ENCODE measurements at regions of chr5 and their contacts with region 1.

Region 1: DNA sequence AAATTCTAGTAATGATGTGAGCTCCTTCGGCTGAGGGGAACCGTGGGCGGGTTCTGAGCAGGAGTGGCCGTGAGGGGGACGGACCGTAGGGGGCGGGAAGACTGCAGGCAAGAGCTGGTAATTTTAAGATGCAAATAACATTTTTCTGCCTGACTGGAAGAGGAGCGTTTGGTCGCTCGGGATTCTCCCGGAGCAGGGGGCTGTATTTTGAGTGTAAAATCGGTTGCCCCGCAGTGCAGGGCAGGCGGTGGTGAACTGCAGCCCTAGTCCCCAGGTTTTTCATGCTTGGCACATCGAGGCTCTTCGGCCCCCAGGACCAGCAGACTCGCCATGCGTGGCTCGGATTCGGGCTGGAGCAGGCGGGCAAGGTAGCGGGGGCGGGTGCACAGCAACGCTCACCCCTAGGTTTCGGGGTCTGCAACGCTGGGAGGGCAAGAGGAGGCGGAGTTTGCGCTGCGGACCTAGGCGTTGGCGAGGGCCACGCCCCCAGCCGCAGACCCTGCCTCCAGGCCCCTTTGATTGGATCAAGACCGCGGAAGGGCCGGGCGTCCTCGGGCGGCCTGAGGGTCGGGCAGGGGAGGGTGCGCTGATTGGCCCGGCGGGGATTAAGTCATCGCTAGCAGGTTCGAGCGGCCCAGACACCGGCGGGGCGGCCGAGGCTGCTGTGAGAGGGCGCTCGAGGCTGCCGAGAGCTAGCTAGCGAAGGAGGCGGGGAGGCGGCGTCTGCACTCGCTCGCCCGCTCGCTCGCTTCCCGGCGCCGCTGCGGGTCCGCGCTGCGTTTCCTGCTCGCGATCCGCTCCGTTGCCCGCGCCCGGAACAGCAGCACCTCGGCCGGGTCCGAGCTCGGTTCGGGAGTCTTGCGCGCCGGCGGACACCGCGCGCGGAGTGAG is at the start of gene ARHGAP26:
- DNase-seq: peak; percentile 98 to 99 (median 99)
- ATAC-seq: peak; percentile 95 to 99 (median 96)
- H3K4me3 ChIP-seq: peak within 1 kb of the TSS; percentile 65 to 99 (median 81)
- H3K27ac ChIP-seq: peak within 1 kb of the TSS; percentile 81 to 94 (median 90)
- H3K4me1 ChIP-seq: peaks cover 5 to 46% (median 28%) of the 10 kb centered on the region in 12 donors
- H3K27me3 ChIP-seq: no peaks in the 10 kb centered on the region
- CTCF ChIP-seq: peak in 9 of 12 donors; percentile 7 to 62 (median 43)
- POLR2A ChIP-seq: peak; percentile 99 to 100
- total RNA-seq, gene ARHGAP26: 22.9 to 52.1 (median 35.6) TPM

Region 2: DNA sequence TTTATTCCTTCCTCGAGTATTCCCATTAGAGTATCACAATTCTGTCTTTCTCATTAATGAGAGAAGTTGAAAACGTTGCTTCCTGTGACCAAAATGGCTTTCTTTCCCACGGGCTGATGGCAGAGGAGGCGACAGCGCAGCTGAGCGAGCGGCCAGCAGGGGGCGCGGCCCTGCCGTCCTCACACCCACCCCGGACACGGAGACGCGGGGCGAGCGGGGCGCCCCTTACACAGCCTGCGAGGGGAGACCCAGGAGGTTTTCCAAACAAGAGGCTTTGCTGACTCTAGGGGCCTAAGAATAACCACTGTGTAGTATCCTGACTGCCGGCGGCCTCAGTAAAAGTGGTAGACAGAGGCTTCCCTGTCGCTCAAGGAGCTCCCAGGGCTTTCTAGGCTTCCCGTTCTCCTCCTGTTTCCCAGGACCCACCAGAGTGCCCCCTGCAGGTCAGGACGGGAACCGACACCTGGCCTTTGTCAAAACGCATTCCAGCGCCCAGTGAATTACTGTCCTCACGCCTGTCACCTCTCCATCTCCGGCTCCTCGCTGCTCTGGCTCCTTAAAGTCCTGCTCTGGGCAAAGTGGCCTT is 56.8 kb before region 1 on chr5:
- intact Hi-C with region 1: loop called in 3 of 10 experiments (anchors 1 to 5 kb)
- DNase-seq: peak; percentile 88 to 94 (median 91)
- ATAC-seq: peak; percentile 60 to 88 (median 86)
- H3K4me3 ChIP-seq: peak overlapping the region in 11 of 12 donors; percentile 31 to 63 (median 56)
- H3K27ac ChIP-seq: peak overlapping the region; percentile 63 to 96 (median 88)
- H3K4me1 ChIP-seq: peaks cover 0 to 46% (median 25%) of the 10 kb centered on the region in 12 donors
- H3K27me3 ChIP-seq: no peaks in the 10 kb centered on the region
- CTCF ChIP-seq: peak; percentile 91 to 99 (median 97)
- POLR2A ChIP-seq: peak in 1 of 2 donors; percentile 27

Region 3: DNA sequence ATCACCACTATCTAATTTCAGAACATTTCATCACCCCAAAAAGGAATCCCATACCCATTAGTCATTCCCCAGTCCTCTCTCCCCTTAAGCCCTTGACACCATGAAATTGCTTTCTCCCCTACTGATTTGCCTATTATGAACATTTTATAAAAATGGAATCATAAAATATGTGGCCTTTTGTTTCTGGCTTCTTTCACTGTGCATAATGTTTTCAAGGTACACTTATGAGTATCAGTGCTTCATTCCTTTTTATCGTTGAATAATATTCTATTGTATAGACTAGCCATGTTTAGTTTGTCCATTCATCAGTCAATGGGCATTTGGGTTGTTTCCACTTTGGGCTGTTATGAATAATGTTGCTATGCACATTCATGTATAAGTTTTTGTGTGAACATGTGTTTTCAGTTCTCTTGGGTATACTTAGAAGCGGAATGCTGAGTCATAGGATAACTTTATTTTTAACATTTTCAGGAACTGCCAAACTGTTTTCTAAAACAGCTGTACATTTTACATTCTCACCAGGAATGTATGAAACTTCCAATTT is 43.7 kb before region 1 on chr5:
- intact Hi-C with region 1: loop called in 2 of 10 experiments (anchors 5 kb)
- DNase-seq: no peak
- ATAC-seq: peak in 2 of 4 donors; percentile 34 to 58
- H3K4me3 ChIP-seq: no peak overlapping the region
- H3K27ac ChIP-seq: peak overlapping the region in 1 of 12 donors; percentile 47
- H3K4me1 ChIP-seq: peaks cover 0 to 32% (median 6%) of the 10 kb centered on the region in 12 donors
- H3K27me3 ChIP-seq: no peaks in the 10 kb centered on the region
- CTCF ChIP-seq: no peak
- POLR2A ChIP-seq: no peak

Region 4: GRCh38 chr5:142807372-142807911 is 37.5 kb after region 1 on chr5:
- intact Hi-C with region 1: loop called in 5 of 10 experiments (anchors 5 kb)
- DNase-seq: peak in 3 of 5 donors; percentile 57 to 66 (median 59)
- ATAC-seq: peak in 3 of 4 donors; percentile 22 to 71 (median 41)
- H3K4me3 ChIP-seq: no peak overlapping the region
- H3K27ac ChIP-seq: peak overlapping the region in 11 of 12 donors; percentile 10 to 91 (median 20)
- H3K4me1 ChIP-seq: peaks cover 14 to 95% (median 73%) of the 10 kb centered on the region in 12 donors
- H3K27me3 ChIP-seq: no peaks in the 10 kb centered on the region
- CTCF ChIP-seq: no peak
- POLR2A ChIP-seq: no peak

Region 5: DNA sequence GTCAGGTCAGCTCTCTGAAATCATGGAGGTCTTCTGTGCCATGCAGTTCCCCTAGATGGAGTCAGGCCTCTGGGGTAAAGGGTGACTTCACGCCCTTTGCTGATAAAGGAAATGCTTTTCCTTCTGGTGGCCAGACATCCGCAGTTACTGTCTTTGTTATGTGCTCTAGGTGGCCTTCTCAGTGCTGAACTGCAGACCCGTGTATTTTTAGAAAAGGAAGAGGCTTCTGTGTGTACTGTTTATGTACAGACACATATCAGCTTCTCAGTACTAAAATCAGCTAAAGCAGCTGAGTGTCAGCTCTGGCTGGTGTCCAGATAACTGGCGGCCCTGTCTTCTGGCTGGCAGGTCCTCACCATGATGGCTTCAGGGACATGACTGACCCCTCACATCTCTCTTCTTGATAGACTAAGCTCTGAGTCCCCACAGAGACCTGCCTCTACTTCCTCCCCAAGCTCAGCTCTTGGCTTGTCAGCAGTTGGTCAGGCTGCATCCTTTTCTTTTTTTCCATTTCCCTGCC is 75.5 kb after region 1 on chr5:
- intact Hi-C with region 1: no loop called
- DNase-seq: peak in 4 of 5 donors; percentile 50 to 62 (median 55)
- ATAC-seq: peak; percentile 39 to 54 (median 46)
- H3K4me3 ChIP-seq: no peak overlapping the region
- H3K27ac ChIP-seq: peak overlapping the region in 11 of 12 donors; percentile 45 to 84 (median 67)
- H3K4me1 ChIP-seq: peaks cover 18 to 93% (median 71%) of the 10 kb centered on the region in 12 donors
- H3K27me3 ChIP-seq: no peaks in the 10 kb centered on the region
- CTCF ChIP-seq: no peak
- POLR2A ChIP-seq: no peak

Region 6: GRCh38 chr5:142860270-142860669 is 90.3 kb after region 1 on chr5:
- intact Hi-C with region 1: loop called in 5 of 10 experiments (anchors 2 to 5 kb)
- DNase-seq: peak in 1 of 5 donors; percentile 54
- ATAC-seq: peak; percentile 35 to 80 (median 58)
- H3K4me3 ChIP-seq: no peak overlapping the region
- H3K27ac ChIP-seq: peak overlapping the region in 9 of 12 donors; percentile 6 to 47 (median 26)
- H3K4me1 ChIP-seq: peaks cover 0 to 88% (median 61%) of the 10 kb centered on the region in 12 donors
- H3K27me3 ChIP-seq: no peaks in the 10 kb centered on the region
- CTCF ChIP-seq: no peak
- POLR2A ChIP-seq: no peak

Region 7: GRCh38 chr5:142874537-142874936 is 104.6 kb after region 1 on chr5:
- intact Hi-C with region 1: loop called in 6 of 10 experiments (anchors 2 to 5 kb)
- DNase-seq: peak; percentile 82 to 87 (median 84)
- ATAC-seq: peak; percentile 35 to 65 (median 61)
- H3K4me3 ChIP-seq: no peak overlapping the region
- H3K27ac ChIP-seq: peak overlapping the region in 10 of 12 donors; percentile 31 to 68 (median 44)
- H3K4me1 ChIP-seq: peaks cover 9 to 76% (median 60%) of the 10 kb centered on the region in 12 donors
- H3K27me3 ChIP-seq: no peaks in the 10 kb centered on the region
- CTCF ChIP-seq: no peak
- POLR2A ChIP-seq: no peak

Region 8: DNA sequence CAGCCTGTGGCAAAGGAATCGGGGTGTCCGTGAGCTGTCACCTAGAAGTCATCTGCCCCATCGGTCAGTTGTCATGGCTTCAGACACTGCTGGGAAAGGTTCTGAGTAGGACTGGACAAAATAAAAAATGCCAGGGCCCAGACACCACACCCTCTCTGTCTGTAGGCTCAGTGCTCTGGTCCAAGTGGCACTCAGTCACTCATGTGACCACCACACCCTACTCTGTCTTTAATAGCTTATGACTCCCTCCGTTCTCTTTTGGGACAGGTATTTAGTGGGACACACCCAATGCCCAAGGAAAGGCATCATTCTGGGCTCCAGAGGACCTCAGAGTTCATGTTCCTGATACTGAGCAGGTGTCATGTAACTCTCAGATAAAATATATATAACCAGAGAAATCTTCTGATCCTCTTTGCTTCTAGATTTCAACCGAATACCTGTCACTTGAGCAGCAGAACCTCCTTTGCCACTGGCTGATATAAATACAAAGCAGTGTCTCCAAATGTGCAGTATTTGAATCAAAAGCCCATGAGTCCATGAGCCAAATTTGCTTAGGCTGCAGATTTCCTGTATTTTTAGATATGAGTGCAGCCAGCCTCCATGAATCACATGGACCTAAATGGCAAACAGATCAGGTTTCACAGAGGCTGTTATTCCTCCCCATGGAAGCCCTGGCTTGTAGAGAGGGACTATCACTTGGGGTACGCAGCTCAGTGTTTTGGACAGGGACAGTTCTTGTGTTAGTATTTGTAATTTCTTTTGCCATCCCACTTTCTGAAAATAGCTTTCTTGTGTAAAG is 272.2 kb after region 1 on chr5:
- intact Hi-C with region 1: no loop called
- DNase-seq: no peak
- ATAC-seq: peak; percentile 81 to 89 (median 86)
- H3K4me3 ChIP-seq: no peak overlapping the region
- H3K27ac ChIP-seq: peak overlapping the region in 11 of 12 donors; percentile 31 to 78 (median 60)
- H3K4me1 ChIP-seq: peaks cover 0 to 30% (median 12%) of the 10 kb centered on the region in 12 donors
- H3K27me3 ChIP-seq: no peaks in the 10 kb centered on the region
- CTCF ChIP-seq: no peak
- POLR2A ChIP-seq: no peak